GM12878 (cell line): ENCODE measurements at regions of chr2 and their contacts with region 1.

Region 1: DNA sequence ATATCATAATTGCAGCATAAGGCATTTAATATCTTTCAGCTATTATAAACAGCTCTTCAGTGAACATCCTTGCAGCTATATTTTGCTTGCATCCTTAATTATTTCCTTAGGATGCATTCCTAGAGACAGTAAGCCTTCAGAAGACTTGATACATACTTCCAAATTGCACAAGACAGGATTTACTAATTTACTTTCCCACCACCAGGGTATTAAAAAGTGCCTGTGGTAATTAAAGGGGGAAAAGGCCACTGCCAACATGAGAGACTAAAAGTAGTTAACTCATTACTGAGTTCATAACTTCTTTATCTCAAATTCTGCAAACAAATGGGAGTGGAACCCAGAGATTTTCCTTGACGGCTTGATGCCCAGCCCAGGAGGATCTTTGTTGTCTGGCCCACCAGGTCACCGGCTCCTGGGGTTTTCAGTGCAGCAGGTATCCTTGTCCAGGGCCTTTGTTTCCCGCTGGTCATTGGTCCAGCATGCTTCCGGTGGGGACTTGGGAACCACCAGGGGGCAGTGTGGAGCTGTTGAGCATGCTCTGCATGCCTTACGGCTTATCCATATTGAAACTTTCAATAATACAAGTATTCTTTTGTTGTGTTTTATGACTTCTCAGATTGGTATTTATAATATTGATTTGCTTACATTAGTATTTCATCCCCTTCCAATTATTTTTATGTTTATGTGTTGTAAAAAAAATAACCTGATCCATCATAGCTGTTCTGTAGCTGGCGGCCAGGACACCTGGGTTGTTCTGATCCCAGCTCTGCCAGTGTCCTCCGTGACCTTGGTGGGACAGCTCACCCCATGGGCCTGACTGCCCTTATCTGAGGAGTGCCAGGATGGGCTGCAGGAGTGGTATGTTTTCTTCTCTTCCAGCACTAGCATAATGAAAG is 61.4 kb downstream of the TGOLN2 start:
- DNase-seq: no peak
- ATAC-seq: peak; percentile 98
- H3K4me3 ChIP-seq: no peak overlapping the region
- H3K27ac ChIP-seq: no peak overlapping the region
- H3K4me1 ChIP-seq: no peaks in the 10 kb centered on the region
- H3K27me3 ChIP-seq: peaks cover 1 to 4% of the 10 kb centered on the region in 2 experiments; a peak in 1 of 4 replicates
- CTCF ChIP-seq: peak; percentile 81 to 86 (median 84)
- EP300 ChIP-seq: no peak
- POLR2A ChIP-seq: no peak
- RAD21 ChIP-seq: peak; percentile 51

Region 2: DNA sequence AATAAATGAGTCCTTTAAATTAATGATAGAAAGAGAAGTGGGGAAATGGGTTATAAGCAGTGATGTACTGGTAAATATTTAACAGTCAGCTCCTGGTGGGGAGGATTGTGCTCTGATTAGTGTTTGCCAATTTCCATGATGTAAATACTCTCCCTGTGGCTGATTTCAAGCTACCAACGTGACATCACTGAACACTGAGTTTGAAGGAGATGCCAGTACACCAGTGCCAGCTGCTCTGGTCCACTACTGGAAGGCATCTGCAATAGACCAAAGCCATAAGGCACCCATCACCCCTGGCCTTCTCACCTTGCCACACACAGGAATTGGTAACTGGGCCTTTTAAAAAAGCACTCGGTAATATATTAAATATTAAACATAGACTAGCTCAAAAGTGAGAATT is 16.3 kb before region 1 on chr2:
- CTCF ChIA-PET with region 1: interaction called, 27 read pairs
- POLR2A ChIA-PET with region 1: no interaction called
- RAD21 ChIA-PET with region 1: no interaction called
- SMC1A ChIA-PET with region 1: interaction called, 3 read pairs
- in situ Hi-C with region 1: no loop called
- intact Hi-C with region 1: no loop called
- DNase-seq: no peak
- ATAC-seq: no peak
- H3K4me3 ChIP-seq: no peak overlapping the region
- H3K27ac ChIP-seq: no peak overlapping the region
- H3K4me1 ChIP-seq: no peaks in the 10 kb centered on the region
- H3K27me3 ChIP-seq: peaks cover 2% of the 10 kb centered on the region in 2 experiments
- CTCF ChIP-seq: no peak
- EP300 ChIP-seq: no peak
- POLR2A ChIP-seq: no peak
- RAD21 ChIP-seq: no peak

Region 3: GRCh38 chr2:85255813-85256594 is 10.4 kb before region 1 on chr2:
- CTCF ChIA-PET with region 1: interaction called, 27 read pairs
- POLR2A ChIA-PET with region 1: no interaction called
- RAD21 ChIA-PET with region 1: interaction called, 4 read pairs
- SMC1A ChIA-PET with region 1: interaction called, 3 read pairs
- in situ Hi-C with region 1: no loop called
- intact Hi-C with region 1: no loop called
- DNase-seq: no peak
- ATAC-seq: no peak
- H3K4me3 ChIP-seq: no peak overlapping the region
- H3K27ac ChIP-seq: no peak overlapping the region
- H3K4me1 ChIP-seq: no peaks in the 10 kb centered on the region
- H3K27me3 ChIP-seq: peaks cover 0 to 2% of the 10 kb centered on the region in 2 experiments; a peak in 3 of 4 replicates
- CTCF ChIP-seq: no peak
- EP300 ChIP-seq: no peak
- POLR2A ChIP-seq: no peak
- RAD21 ChIP-seq: no peak

Region 4: GRCh38 chr2:85288244-85288725 is 21.9 kb after region 1 on chr2:
- CTCF ChIA-PET with region 1: interaction called, 57 read pairs
- POLR2A ChIA-PET with region 1: no interaction called
- RAD21 ChIA-PET with region 1: interaction called, 6 read pairs
- SMC1A ChIA-PET with region 1: interaction called, 10 read pairs
- in situ Hi-C with region 1: no loop called
- intact Hi-C with region 1: no loop called
- DNase-seq: no peak
- ATAC-seq: no peak
- H3K4me3 ChIP-seq: no peak overlapping the region
- H3K27ac ChIP-seq: no peak overlapping the region
- H3K4me1 ChIP-seq: no peaks in the 10 kb centered on the region; the same call in 1 of the 2 replicates
- H3K27me3 ChIP-seq: no peaks in the 10 kb centered on the region; a peak in 1 of 4 replicates
- CTCF ChIP-seq: no peak
- EP300 ChIP-seq: no peak
- POLR2A ChIP-seq: no peak
- RAD21 ChIP-seq: no peak

Region 5: GRCh38 chr2:85524336-85524933 is 258.0 kb after region 1 on chr2:
- CTCF ChIA-PET with region 1: no interaction called
- POLR2A ChIA-PET with region 1: no interaction called
- RAD21 ChIA-PET with region 1: no interaction called
- SMC1A ChIA-PET with region 1: no interaction called
- in situ Hi-C with region 1: no loop called
- intact Hi-C with region 1: no loop called
- DNase-seq: no peak
- ATAC-seq: peak; percentile 50
- H3K4me3 ChIP-seq: no peak overlapping the region
- H3K27ac ChIP-seq: no peak overlapping the region
- H3K4me1 ChIP-seq: no peaks in the 10 kb centered on the region; the same call in 1 of the 2 replicates
- H3K27me3 ChIP-seq: no peaks in the 10 kb centered on the region; a peak in 1 of 4 replicates
- CTCF ChIP-seq: no peak
- EP300 ChIP-seq: no peak
- POLR2A ChIP-seq: no peak
- RAD21 ChIP-seq: no peak